ENCODE measurements at regions of chr12 and their contacts with region 1.

Region 1: GRCh38 chr12:89451841-89452251 is 72.8 kb downstream of the GALNT4 start:
- DNase-seq: peak; percentile 92
- H3K4me3 ChIP-seq: peak overlapping the region; percentile 46
- H3K27ac ChIP-seq: peak overlapping the region; percentile 96
- H3K4me1 ChIP-seq: peaks cover 60% of the 10 kb centered on the region
- H3K27me3 ChIP-seq: no peaks in the 10 kb centered on the region

Region 2: GRCh38 chr12:89040146-89040964 is 411.5 kb before region 1 on chr12:
- in situ Hi-C with region 1: loop called (anchors 10 kb)
- DNase-seq: peak; percentile 27
- H3K4me3 ChIP-seq: no peak overlapping the region
- H3K27ac ChIP-seq: no peak overlapping the region
- H3K4me1 ChIP-seq: no peaks in the 10 kb centered on the region
- H3K27me3 ChIP-seq: no peaks in the 10 kb centered on the region